IMR-90 (cell line): ENCODE measurements at regions of chr4 and their contacts with region 1.

Region 1: DNA sequence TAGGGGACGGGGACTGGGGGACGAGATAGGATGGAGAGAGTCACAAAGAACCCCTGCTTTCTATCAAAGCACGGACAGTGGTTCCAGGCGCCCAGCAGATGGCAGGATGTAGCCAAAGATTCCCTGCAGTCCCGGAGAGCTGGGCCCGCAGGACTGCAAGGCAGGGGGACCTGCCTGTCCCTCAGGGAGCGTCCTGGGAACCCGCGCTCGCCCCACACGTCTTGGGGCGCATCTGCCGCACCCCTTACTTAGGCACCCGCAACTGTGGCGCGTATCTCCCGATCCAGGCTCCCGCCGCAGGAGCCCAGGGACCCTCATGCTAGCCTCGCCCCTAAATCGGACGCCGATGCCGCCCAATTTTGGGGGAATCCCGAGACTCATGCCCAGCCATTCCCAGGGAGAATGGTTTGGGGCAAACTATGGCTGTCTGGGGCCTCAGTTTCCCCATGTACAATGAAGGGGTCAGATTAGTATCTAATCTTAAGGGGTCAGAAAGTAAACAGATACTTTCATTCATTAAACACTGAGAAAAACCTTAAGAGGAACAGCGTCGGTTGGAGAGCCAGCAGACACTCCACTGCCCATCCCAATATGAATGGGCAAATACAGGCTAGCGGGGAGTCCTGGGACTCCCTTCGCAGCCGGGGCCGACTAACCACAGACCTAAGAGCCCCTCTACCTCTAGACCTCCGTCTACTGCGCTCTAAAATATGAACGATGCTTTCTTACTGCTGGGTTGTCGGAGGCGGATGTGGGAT is 581 bp upstream of the STK32B start:
- DNase-seq: peak; percentile 83
- ATAC-seq: peak; percentile 76
- H3K4me3 ChIP-seq: peak overlapping the region; percentile 53
- H3K27ac ChIP-seq: peak overlapping the region; percentile 61
- H3K4me1 ChIP-seq: peaks cover 2% of the 10 kb centered on the region; the same call in 1 of the 2 replicates
- H3K27me3 ChIP-seq: no peaks in the 10 kb centered on the region
- CTCF ChIP-seq: peak; percentile 85
- POLR2A ChIP-seq: peak; percentile 6; the same call in 1 of the 2 replicates
- RAD21 ChIP-seq: peak; percentile 90

Region 2: DNA sequence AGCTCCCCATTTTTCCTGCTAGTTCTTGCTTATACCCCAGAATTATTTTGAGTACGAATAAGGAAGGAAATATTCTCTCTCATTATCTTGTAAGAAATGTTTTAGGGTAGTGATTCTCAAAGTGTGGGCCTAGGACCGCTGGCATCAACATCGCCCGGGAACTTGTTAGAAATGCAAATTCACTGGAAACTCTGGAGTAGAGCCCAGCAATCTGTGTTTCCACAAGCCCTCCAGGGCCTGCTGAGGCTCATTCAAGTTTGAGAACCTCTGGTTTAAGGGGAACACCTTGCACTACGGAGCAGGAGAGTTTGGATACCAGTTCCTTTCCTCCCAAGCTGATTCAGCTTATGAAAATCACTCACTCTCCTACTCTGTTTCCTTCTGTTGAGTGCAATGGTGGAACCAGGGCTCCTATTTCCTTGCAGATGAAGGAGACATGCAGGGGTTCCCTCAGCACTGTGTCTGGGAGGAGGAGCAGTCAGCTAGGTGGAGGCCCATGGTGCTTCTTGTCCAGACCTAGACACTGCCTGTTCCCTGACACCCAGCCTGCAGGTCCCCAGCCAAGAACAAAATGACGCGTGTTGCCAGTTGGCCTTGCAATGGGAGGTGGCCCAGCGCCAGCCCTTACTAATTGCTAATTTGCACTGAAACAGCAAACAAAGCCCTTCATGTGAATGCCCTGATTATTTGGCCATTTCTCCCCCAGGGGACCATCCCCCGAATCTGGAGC is 100.0 kb before region 1 on chr4:
- CTCF ChIA-PET with region 1: no interaction called
- POLR2A ChIA-PET with region 1: no interaction called
- dilution Hi-C with region 1: no loop called
- in situ Hi-C with region 1: no loop called
- intact Hi-C with region 1: no loop called
- DNase-seq: no peak
- ATAC-seq: no peak
- H3K4me3 ChIP-seq: no peak overlapping the region
- H3K27ac ChIP-seq: no peak overlapping the region
- H3K4me1 ChIP-seq: no peaks in the 10 kb centered on the region
- H3K27me3 ChIP-seq: peaks cover 13% of the 10 kb centered on the region
- CTCF ChIP-seq: no peak
- POLR2A ChIP-seq: no peak
- RAD21 ChIP-seq: no peak

Region 3: GRCh38 chr4:5142726-5143125 is 92.0 kb after region 1 on chr4:
- CTCF ChIA-PET with region 1: interaction called, 4 read pairs
- POLR2A ChIA-PET with region 1: interaction called, 4 read pairs
- dilution Hi-C with region 1: no loop called
- in situ Hi-C with region 1: no loop called
- intact Hi-C with region 1: loop called (anchors 1 kb)
- DNase-seq: peak; percentile 66
- ATAC-seq: peak; percentile 67
- H3K4me3 ChIP-seq: no peak overlapping the region
- H3K27ac ChIP-seq: no peak overlapping the region
- H3K4me1 ChIP-seq: no peaks in the 10 kb centered on the region
- H3K27me3 ChIP-seq: no peaks in the 10 kb centered on the region
- CTCF ChIP-seq: peak; percentile 67
- POLR2A ChIP-seq: no peak
- RAD21 ChIP-seq: peak; percentile 69

Region 4: GRCh38 chr4:5307928-5308327 is 257.2 kb after region 1 on chr4:
- CTCF ChIA-PET with region 1: no interaction called
- POLR2A ChIA-PET with region 1: no interaction called
- dilution Hi-C with region 1: no loop called
- in situ Hi-C with region 1: no loop called
- intact Hi-C with region 1: no loop called
- DNase-seq: no peak
- ATAC-seq: no peak
- H3K4me3 ChIP-seq: no peak overlapping the region
- H3K27ac ChIP-seq: no peak overlapping the region
- H3K4me1 ChIP-seq: no peaks in the 10 kb centered on the region
- H3K27me3 ChIP-seq: no peaks in the 10 kb centered on the region
- CTCF ChIP-seq: no peak
- POLR2A ChIP-seq: no peak
- RAD21 ChIP-seq: no peak

Region 5: GRCh38 chr4:5340991-5341451 is 290.3 kb after region 1 on chr4:
- CTCF ChIA-PET with region 1: no interaction called
- POLR2A ChIA-PET with region 1: no interaction called
- dilution Hi-C with region 1: no loop called
- in situ Hi-C with region 1: no loop called
- intact Hi-C with region 1: loop called (anchors 10 kb)
- DNase-seq: no peak
- ATAC-seq: no peak
- H3K4me3 ChIP-seq: no peak overlapping the region
- H3K27ac ChIP-seq: no peak overlapping the region
- H3K4me1 ChIP-seq: no peaks in the 10 kb centered on the region
- H3K27me3 ChIP-seq: no peaks in the 10 kb centered on the region
- CTCF ChIP-seq: no peak
- POLR2A ChIP-seq: no peak
- RAD21 ChIP-seq: no peak

Region 6: DNA sequence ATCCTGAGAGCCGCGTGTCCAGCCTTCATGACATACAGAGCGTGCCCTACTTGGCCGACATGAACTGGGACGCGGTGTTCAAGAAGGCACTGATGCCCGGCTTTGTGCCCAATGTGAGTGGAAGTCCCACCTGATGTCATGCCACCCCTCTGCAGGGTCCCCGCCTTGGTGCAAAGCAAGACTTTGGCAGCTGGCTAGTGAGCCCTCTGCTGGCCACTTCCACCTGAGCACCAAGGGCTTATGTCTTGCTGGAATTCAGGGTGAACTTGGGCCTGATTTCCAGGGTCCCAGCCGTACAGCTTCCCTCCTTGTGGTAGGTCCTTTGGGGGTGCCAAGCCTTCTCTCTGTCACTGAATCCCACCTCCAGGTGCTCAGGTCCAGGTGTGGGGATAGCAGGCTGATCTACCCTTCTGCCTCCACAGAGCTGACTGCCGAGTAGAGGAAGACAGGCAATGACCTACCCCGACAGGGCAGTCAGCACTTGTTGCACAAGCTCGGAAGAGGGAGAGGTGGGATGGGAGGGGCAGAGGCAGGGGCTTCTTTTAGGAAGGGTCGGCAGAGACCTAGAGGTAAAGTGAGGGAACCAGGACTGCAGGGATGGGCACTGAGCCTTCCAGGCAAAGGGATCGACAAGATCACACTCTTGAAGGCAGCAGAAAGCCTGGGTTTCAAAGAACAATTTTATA is 409.6 kb after region 1 on chr4:
- CTCF ChIA-PET with region 1: interaction called, 3 read pairs
- POLR2A ChIA-PET with region 1: no interaction called
- dilution Hi-C with region 1: no loop called
- in situ Hi-C with region 1: no loop called
- intact Hi-C with region 1: loop called (anchors 1 kb)
- DNase-seq: peak; percentile 37
- ATAC-seq: peak; percentile 81
- H3K4me3 ChIP-seq: no peak overlapping the region
- H3K27ac ChIP-seq: no peak overlapping the region
- H3K4me1 ChIP-seq: no peaks in the 10 kb centered on the region
- H3K27me3 ChIP-seq: no peaks in the 10 kb centered on the region
- CTCF ChIP-seq: peak; percentile 54
- POLR2A ChIP-seq: no peak
- RAD21 ChIP-seq: peak; percentile 48

Region 7: DNA sequence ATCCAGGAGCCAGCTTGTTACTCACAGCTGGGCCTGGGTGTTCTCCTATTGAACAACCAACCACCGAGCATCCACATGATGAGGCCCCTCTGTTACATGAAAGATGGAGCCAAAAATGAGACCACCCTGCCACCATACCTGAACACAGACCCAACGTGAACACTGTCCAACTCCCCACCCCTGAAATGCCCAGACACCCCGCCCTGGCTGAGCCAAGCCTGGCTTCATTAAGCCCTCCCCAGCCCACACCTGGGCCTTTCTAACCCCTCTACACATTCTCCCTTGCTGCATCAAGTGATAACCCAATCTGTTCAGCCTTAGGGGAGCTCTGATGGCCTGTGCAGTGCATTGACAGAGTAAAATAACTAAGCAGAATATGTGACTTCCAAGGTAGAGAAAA is 741.0 kb after region 1 on chr4:
- CTCF ChIA-PET with region 1: no interaction called
- POLR2A ChIA-PET with region 1: no interaction called
- dilution Hi-C with region 1: no loop called
- in situ Hi-C with region 1: loop called (anchors 10 kb)
- intact Hi-C with region 1: loop called (anchors 1 kb)
- DNase-seq: no peak
- ATAC-seq: no peak
- H3K4me3 ChIP-seq: no peak overlapping the region
- H3K27ac ChIP-seq: no peak overlapping the region
- H3K4me1 ChIP-seq: no peaks in the 10 kb centered on the region
- H3K27me3 ChIP-seq: no peaks in the 10 kb centered on the region
- CTCF ChIP-seq: no peak
- POLR2A ChIP-seq: no peak
- RAD21 ChIP-seq: no peak